Lower leg skin (tissue), 4 donors: ENCODE measurements at regions of chr10 and their contacts with region 1.

Region 1: DNA sequence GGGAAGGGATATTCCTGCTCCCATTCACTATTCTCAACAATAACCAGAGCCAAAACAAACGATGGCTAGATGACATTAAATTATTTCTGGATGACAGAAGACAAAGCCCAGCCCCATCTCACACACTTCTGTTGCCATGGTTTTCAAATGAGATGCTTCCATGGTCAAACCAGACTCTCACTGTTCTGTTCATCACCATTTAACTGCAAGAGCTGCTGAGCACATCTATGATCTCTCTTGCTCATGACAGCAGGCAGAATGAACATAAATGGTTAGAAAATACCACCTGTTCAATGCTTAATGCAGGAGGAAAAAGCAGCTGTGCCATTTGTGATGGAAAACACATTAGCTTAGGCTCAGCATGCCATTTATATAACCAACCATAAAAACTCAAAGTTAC is 758.6 kb upstream of the ZWINT start:
- DNase-seq: no peak
- H3K4me3 ChIP-seq: no peak overlapping the region
- CTCF ChIP-seq: no peak
- POLR2A ChIP-seq: no peak

Region 2: DNA sequence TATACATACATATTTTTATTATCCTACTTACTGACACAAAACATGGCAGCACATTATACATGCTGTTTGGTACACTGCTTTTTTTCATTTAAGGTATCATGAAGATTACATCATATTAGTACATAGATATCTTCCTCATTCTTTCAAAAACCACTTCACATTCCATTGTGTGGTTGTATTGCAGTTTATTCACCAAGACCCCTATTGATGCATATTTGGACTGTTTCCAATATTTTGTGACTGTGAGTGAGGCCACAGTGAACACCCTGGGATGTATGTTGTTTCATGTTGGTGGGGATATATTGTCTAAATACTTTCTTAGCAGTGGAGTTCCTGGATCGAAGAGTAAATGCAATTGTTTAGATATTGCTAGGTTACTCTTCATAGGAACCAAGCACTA is 1304.5 kb after region 1 on chr10:
- intact Hi-C with region 1: loop called (anchors 5 kb)
- DNase-seq: no peak
- H3K4me3 ChIP-seq: no peak overlapping the region
- CTCF ChIP-seq: no peak
- POLR2A ChIP-seq: no peak